Dorsolateral prefrontal cortex (tissue), 120 donors: ENCODE measurements at regions of chr2 and their contacts with region 1.

Region 1: DNA sequence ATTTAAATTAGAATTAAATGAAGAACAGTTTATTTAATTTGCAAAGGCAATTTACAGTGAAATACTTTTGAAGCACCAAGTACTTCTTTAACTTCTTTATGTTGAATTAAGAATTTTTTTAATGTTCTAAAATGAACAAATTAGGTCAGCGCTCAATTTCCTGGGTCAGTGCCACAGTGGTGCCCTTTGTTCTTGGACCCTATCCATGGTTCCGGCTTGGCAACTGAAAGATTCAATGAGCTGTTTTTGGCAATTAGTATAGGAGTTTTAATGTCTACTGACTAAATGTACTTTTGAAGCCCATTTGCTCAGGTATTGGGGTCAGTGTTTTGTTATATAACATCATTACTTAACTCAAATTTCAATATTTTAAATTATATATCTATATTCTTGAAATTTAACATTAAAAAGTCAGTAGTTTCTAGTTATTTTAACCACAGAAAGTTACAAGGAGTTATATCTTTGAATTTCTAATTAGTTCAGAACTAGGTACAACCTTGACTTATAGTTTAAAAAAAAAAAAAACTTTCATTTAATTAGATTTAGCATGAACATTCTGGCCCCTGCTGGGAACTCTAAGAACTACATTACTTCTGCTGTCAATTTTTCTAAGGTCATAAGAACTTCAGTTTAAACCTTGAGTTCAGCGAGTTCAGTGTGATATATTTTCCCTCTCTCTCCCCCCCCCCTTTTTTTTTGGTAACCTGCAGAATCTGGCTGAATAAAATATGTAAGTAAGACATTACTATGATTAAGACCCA is 7.6 kb upstream of the MSTN start:
- DNase-seq: peak in 2 of 10 donors; percentile 10 to 28
- H3K4me3 ChIP-seq: no peak overlapping the region
- H3K27ac ChIP-seq: no peak overlapping the region
- H3K27me3 ChIP-seq: no peaks in the 10 kb centered on the region
- CTCF ChIP-seq: peak in 55 of 56 donors; percentile 47 to 77 (median 62)

Region 2: GRCh38 chr2:189798312-189799029 is 271.6 kb before region 1 on chr2:
- intact Hi-C with region 1: loop called in 1 of 2 experiments (anchors 5 kb)
- DNase-seq: no peak
- H3K4me3 ChIP-seq: peak overlapping the region in 2 of 59 donors; percentile 3 to 10
- H3K27ac ChIP-seq: peak overlapping the region in 55 of 59 donors; percentile 6 to 79 (median 58)
- H3K27me3 ChIP-seq: no peaks in the 10 kb centered on the region
- CTCF ChIP-seq: peak; percentile 12 to 72 (median 56)

Region 3: GRCh38 chr2:190646780-190647522 is 576.8 kb after region 1 on chr2:
- intact Hi-C with region 1: no loop called
- DNase-seq: no peak
- H3K4me3 ChIP-seq: peak overlapping the region in 57 of 59 donors; percentile 9 to 92 (median 84)
- H3K27ac ChIP-seq: peak overlapping the region in 58 of 59 donors; percentile 44 to 98 (median 94)
- H3K27me3 ChIP-seq: no peaks in the 10 kb centered on the region
- CTCF ChIP-seq: no peak